Mammary epithelial cell (primary cell): ENCODE measurements at regions of chr6 and their contacts with region 1.

Region 1: DNA sequence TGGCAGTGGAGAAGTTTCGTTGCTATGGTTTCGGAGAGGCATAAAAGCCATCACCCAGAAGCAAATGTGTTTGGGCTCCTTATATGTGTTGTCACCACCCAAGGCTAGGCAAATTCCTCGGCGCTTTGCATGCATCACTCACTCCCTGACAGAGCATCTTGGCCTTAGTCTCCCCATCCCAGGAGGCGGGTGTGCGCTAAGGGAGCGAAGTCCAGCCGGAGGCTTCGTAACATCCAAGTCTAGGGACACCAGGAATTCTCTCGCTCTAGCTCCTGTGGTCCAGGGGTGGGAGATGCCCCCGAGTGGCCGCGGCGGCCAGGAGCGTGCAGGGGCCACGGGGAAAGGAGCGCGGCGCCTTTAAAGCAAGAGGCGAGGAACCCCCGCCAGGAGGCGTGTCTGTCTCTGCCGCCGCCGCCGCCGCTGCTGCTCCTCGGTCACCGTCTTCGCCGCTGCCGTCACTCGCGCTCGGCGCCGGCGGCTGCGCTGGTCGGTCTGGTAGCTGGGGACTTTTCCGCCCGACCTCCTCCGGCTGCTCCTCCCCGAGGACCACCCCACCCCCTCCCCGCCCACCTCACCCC is at the start of gene GRIK2:
- DNase-seq: peak; percentile 46
- H3K4me3 ChIP-seq: peak within 1 kb of the TSS; percentile 46 to 61 (median 55)
- H3K27ac ChIP-seq: no peak within 1 kb of the TSS
- H3K4me1 ChIP-seq: peaks cover 12% of the 10 kb centered on the region
- H3K27me3 ChIP-seq: peaks cover 19% of the 10 kb centered on the region
- CTCF ChIP-seq: peak in 1 of 2 donors; percentile 59
- total RNA-seq, gene GRIK2: 1.4 to 2.8 TPM

Region 2: GRCh38 chr6:101069191-101069795 is 324.0 kb before region 1 on chr6:
- CTCF ChIA-PET with region 1: interaction called, 11 read pairs
- dilution Hi-C with region 1: no loop called
- in situ Hi-C with region 1: no loop called
- intact Hi-C with region 1: no loop called
- DNase-seq: peak; percentile 56
- H3K4me3 ChIP-seq: no peak overlapping the region
- H3K27ac ChIP-seq: no peak overlapping the region
- H3K4me1 ChIP-seq: peaks cover 5% of the 10 kb centered on the region
- H3K27me3 ChIP-seq: no peaks in the 10 kb centered on the region
- CTCF ChIP-seq: peak; percentile 13 to 31

Region 3: DNA sequence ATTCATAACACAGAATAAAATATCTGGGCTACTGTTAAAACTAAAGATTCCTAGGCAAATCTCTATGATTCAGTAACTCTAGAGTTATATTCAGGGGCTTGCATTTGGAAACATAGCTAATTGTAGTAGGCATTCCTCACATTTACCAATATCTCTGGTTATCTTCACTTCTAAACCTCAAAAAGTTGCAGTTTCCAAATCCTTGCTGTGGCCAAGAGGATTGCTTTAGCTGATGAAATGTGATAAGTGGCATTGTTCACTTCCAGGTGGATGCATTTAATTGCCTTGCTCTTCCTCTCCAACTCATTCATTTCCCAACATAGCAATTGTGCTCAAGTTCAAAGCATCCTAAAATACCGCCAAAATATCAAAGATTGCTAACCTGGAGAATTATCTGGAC is 246.8 kb after region 1 on chr6:
- CTCF ChIA-PET with region 1: no interaction called
- dilution Hi-C with region 1: no loop called
- in situ Hi-C with region 1: no loop called
- intact Hi-C with region 1: loop called (anchors 10 kb)
- DNase-seq: no peak
- H3K4me3 ChIP-seq: no peak overlapping the region
- H3K27ac ChIP-seq: no peak overlapping the region
- H3K4me1 ChIP-seq: no peaks in the 10 kb centered on the region
- H3K27me3 ChIP-seq: no peaks in the 10 kb centered on the region
- CTCF ChIP-seq: no peak

Region 4: DNA sequence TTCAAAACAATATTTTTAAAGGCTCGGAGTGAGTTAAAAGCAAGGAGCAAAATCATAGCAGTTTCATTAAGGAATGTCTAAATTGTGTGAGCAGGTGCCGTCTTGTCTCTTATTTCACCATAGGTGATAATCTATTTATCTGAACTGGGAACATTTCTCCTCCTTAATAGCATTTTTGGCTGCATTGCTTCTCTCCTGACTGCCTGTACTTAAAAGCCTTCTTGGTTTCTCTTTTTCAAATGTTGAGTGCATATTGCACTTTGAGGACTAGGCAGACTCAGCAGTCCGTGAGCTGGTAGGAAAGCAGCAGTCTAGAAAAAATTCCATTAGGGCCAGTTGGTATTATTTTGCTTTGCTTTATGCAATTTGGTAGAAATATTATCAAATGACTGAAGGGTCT is 646.1 kb after region 1 on chr6:
- CTCF ChIA-PET with region 1: no interaction called
- dilution Hi-C with region 1: no loop called
- in situ Hi-C with region 1: no loop called
- intact Hi-C with region 1: loop called (anchors 10 kb)
- DNase-seq: no peak
- H3K4me3 ChIP-seq: no peak overlapping the region
- H3K27ac ChIP-seq: no peak overlapping the region
- H3K4me1 ChIP-seq: no peaks in the 10 kb centered on the region
- H3K27me3 ChIP-seq: no peaks in the 10 kb centered on the region
- CTCF ChIP-seq: no peak

Region 5: DNA sequence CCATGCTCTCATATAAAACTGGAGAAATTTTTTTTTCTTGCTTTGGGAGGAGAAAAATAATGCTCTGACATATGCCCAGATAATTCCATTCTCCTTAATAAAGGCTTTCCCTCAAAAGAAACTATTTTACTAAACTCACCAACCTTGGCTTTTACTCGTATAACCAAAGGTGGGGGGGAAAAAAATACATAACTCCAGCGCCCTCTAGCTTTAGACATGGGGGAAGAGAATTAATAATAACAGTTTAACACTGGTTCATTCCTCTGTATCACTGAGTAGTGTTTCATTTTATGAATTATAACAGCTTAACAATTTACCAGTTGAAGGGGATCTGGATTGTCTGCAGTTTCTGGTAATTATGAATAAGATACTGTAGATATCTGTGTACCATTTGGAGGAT is 1226.2 kb after region 1 on chr6:
- CTCF ChIA-PET with region 1: no interaction called
- dilution Hi-C with region 1: no loop called
- in situ Hi-C with region 1: no loop called
- intact Hi-C with region 1: loop called (anchors 10 kb)
- DNase-seq: peak; percentile 3
- H3K4me3 ChIP-seq: no peak overlapping the region
- H3K27ac ChIP-seq: no peak overlapping the region
- H3K4me1 ChIP-seq: no peaks in the 10 kb centered on the region
- H3K27me3 ChIP-seq: no peaks in the 10 kb centered on the region
- CTCF ChIP-seq: peak; percentile 63 to 65